ENCODE measurements at regions of chr9 and their contacts with region 1.

Region 1: GRCh38 chr9:27726244-27727081 is 153.2 kb upstream of the C9orf72 start:
- DNase-seq: peak; percentile 60
- H3K4me3 ChIP-seq: no peak overlapping the region
- H3K27ac ChIP-seq: no peak overlapping the region
- H3K4me1 ChIP-seq: no peaks in the 10 kb centered on the region
- H3K27me3 ChIP-seq: no peaks in the 10 kb centered on the region
- CTCF ChIP-seq: peak; percentile 89 to 94

Region 2: GRCh38 chr9:27847818-27848217 is 121.4 kb after region 1 on chr9:
- CTCF ChIA-PET with region 1: interaction called, 3 read pairs
- dilution Hi-C with region 1: no loop called
- in situ Hi-C with region 1: loop called in 1 of 2 experiments (anchors 25 kb)
- intact Hi-C with region 1: no loop called
- DNase-seq: no peak
- H3K4me3 ChIP-seq: no peak overlapping the region
- H3K27ac ChIP-seq: no peak overlapping the region
- H3K4me1 ChIP-seq: no peaks in the 10 kb centered on the region
- H3K27me3 ChIP-seq: peaks cover 5% of the 10 kb centered on the region
- CTCF ChIP-seq: no peak

Region 3: DNA sequence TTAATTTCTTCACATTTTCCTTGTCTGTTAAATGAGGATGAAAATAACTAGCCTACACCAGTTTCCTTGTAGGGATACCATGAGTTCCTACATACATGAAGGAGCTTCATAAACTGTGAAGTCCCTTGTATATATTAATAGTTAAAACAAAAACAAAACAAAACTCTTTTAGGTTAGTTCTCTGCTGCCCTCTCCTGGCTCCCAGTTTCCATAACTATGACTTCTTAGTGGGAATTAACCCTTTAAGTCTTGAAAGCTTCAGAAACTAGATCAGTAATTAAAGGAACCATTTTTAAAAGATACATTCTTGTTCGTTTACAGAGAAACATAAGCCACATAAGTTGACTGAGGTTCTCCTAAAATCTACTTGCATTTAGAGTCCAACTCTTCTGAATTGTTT is 346.8 kb after region 1 on chr9:
- CTCF ChIA-PET with region 1: interaction called, 7 read pairs
- dilution Hi-C with region 1: loop called (anchors 25 kb)
- in situ Hi-C with region 1: loop called (anchors 5 to 25 kb)
- intact Hi-C with region 1: loop called (anchors 1 kb)
- DNase-seq: peak; percentile 32
- H3K4me3 ChIP-seq: no peak overlapping the region
- H3K27ac ChIP-seq: no peak overlapping the region
- H3K4me1 ChIP-seq: no peaks in the 10 kb centered on the region
- H3K27me3 ChIP-seq: peaks cover 2% of the 10 kb centered on the region
- CTCF ChIP-seq: peak; percentile 49 to 65

Region 4: GRCh38 chr9:28365020-28365640 is 638.7 kb after region 1 on chr9:
- CTCF ChIA-PET with region 1: no interaction called
- dilution Hi-C with region 1: no loop called
- in situ Hi-C with region 1: no loop called
- intact Hi-C with region 1: loop called (anchors 1 kb)
- DNase-seq: peak; percentile 54
- H3K4me3 ChIP-seq: no peak overlapping the region
- H3K27ac ChIP-seq: no peak overlapping the region
- H3K4me1 ChIP-seq: no peaks in the 10 kb centered on the region
- H3K27me3 ChIP-seq: no peaks in the 10 kb centered on the region
- CTCF ChIP-seq: peak in 1 of 2 donors; percentile 34